Spleen (tissue), 13 donors: ENCODE measurements at regions of chr13 and their contacts with region 1.

Region 1: GRCh38 chr13:78121459-78122348 is 203.1 kb upstream of the EDNRB start:
- DNase-seq: no peak
- H3K4me3 ChIP-seq: no peak overlapping the region
- H3K27ac ChIP-seq: no peak overlapping the region
- H3K4me1 ChIP-seq: peaks cover 0 to 10% (median 6%) of the 10 kb centered on the region in 6 donors
- H3K27me3 ChIP-seq: peaks cover 0 to 6% (median 0%) of the 10 kb centered on the region in 7 donors
- CTCF ChIP-seq: peak; percentile 55 to 87 (median 82)
- POLR2A ChIP-seq: no peak

Region 2: DNA sequence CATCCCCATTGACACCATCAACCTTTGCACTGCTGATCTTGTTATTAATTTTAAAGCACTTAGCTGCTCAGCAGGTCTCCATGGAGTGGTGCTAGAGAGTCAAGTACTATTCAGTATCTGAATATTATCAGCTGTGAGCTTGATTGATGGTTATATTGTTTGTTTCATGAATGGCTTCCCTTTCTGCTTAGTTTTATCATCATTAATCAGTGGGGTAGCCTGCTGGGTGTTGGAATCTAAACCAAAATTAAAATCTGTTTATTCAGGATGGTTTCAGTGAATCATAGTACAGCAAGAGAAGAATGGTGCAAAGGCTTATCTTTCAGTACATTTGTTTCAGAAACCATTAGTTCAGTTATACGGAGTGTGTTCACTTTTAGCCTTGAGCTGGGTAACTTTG is 628.7 kb before region 1 on chr13:
- intact Hi-C with region 1: no loop called
- DNase-seq: no peak
- H3K4me3 ChIP-seq: no peak overlapping the region
- H3K27ac ChIP-seq: no peak overlapping the region
- H3K4me1 ChIP-seq: no peaks in the 10 kb centered on the region
- H3K27me3 ChIP-seq: peaks cover 0 to 6% (median 0%) of the 10 kb centered on the region in 7 donors
- CTCF ChIP-seq: peak in 8 of 11 experiments; percentile 13 to 56 (median 36)
- POLR2A ChIP-seq: no peak

Region 3: DNA sequence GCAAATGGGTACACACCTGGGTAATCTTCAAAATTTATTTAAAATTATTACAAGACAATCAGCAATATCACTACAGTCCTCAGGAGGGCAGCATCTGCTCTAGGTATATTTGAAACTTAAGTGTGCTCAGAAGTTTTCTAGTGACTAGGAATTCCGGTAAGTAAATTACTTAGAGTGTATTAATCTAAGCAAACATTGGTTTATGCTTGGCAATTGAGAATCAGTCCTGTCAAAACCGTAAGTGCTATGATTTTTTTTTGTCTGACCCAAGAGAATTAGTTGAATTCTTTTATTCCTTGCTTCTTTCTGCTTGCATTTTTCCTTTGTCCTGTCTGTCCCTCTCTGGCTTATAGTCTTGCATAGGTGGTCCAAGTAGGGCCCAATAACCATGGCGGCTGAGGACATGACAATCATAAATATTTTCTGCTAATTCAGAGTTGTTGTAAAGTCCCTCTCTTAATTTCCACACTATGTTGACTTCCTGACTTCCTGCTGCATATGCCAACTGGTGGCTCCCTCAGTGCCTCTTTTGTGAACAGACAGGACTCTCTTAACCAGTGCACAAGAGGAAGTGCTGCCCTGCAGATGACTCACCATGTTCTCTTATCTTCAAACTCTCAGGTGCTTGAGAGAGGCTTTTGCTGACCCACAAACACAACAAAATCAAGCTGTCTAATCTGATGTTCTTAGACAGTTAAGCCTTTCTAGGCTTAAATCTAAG is 342.0 kb before region 1 on chr13:
- intact Hi-C with region 1: loop called (anchors 1 kb)
- DNase-seq: no peak
- H3K4me3 ChIP-seq: no peak overlapping the region
- H3K27ac ChIP-seq: peak overlapping the region in 4 of 8 donors; percentile 0 to 33 (median 21)
- H3K4me1 ChIP-seq: peaks cover 0 to 11% (median 6%) of the 10 kb centered on the region in 6 donors
- H3K27me3 ChIP-seq: no peaks in the 10 kb centered on the region
- CTCF ChIP-seq: peak; percentile 34 to 72 (median 59)
- POLR2A ChIP-seq: no peak